Naive thymus-derived CD8-positive, alpha-beta T cell (primary cell): ENCODE measurements at regions of chr11 and their contacts with region 1.

Region 1: DNA sequence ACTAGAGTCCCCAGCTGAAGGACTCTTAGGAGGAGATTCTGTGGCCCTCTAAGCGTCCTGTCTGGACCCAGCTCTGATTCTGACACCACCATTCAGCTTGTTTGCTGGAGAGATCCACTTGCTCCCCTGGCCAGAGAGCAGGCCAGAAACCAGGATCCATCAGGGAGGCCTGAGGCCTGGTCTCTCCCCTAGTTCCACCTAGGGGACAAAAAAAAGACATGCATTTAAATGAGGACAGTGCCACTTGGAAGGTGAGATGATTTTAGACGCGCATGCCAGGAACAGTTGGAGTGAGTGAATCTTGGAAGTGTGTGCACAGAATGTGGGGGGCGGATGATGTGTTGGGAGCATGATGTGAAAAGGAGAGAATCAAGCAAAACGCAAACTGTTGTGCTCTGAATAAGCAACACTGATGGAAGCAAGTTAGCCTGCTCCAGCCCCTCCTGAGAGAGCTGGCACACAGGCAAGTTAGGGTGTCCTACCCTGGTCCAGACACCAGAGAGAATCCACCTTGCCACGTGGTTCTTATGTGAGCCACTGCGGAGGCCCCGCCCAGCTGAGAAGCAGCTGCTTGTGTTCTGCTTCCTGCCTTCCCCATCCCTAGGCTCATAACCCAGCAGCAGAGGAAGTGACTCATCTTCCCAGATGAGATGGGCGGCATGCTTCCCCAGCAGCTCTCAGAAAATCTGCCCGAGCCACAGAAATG is 8.0 kb upstream of the SLCO2B1 start:
- DNase-seq: peak in 9 of 10 donors; percentile 24 to 82 (median 44)
- ATAC-seq: peak; percentile 84 to 88
- H3K4me3 Mint-ChIP-seq: peak overlapping the region in 9 of 10 donors; percentile 47 to 82 (median 69)
- H3K27ac Mint-ChIP-seq: peak overlapping the region; percentile 17 to 93 (median 80)
- H3K4me1 Mint-ChIP-seq: peaks cover 29 to 47% (median 42%) of the 10 kb centered on the region in 4 donors
- H3K27me3 Mint-ChIP-seq: peaks cover under 1 to 5% (median 4%) of the 10 kb centered on the region in 5 donors

Region 2: GRCh38 chr11:75195121-75195551 is 52.3 kb after region 1 on chr11:
- POLR2A ChIA-PET with region 1: no interaction called
- DNase-seq: no peak
- ATAC-seq: no peak
- H3K4me3 Mint-ChIP-seq: no peak overlapping the region
- H3K27ac Mint-ChIP-seq: no peak overlapping the region
- H3K4me1 Mint-ChIP-seq: peaks cover 0 to 2% (median 0%) of the 10 kb centered on the region in 4 donors
- H3K27me3 Mint-ChIP-seq: no peaks in the 10 kb centered on the region

Region 3: GRCh38 chr11:75241036-75241905 is 98.4 kb after region 1 on chr11:
- POLR2A ChIA-PET with region 1: interaction called, 13 read pairs
- DNase-seq: peak; percentile 69 to 91 (median 84)
- ATAC-seq: peak; percentile 89 to 93
- H3K4me3 Mint-ChIP-seq: peak overlapping the region; percentile 55 to 81 (median 70)
- H3K27ac Mint-ChIP-seq: no peak overlapping the region
- H3K4me1 Mint-ChIP-seq: peaks cover 3 to 15% (median 10%) of the 10 kb centered on the region in 4 donors
- H3K27me3 Mint-ChIP-seq: peaks cover 17 to 58% (median 43%) of the 10 kb centered on the region in 5 donors

Region 4: GRCh38 chr11:75356613-75357012 is 213.7 kb after region 1 on chr11:
- POLR2A ChIA-PET with region 1: no interaction called
- DNase-seq: no peak
- ATAC-seq: no peak
- H3K4me3 Mint-ChIP-seq: no peak overlapping the region
- H3K27ac Mint-ChIP-seq: peak overlapping the region in 6 of 10 donors; percentile 27 to 90 (median 78)
- H3K4me1 Mint-ChIP-seq: peaks cover 21 to 42% (median 34%) of the 10 kb centered on the region in 4 donors
- H3K27me3 Mint-ChIP-seq: no peaks in the 10 kb centered on the region